Dendritic cell treated with granulocyte-macrophage colony-stimulating factor and Interleukin-4, amounts not matched to agents 40 ng/mL and 50 ng/mL, for 4 days (primary cell): ENCODE measurements at regions of chr3 and their contacts with region 1.

Region 1: GRCh38 chr3:43326891-43327581 is 40.7 kb downstream of the SNRK start:
- H3K4me3 Mint-ChIP-seq: peak overlapping the region; percentile 52
- H3K27ac Mint-ChIP-seq: peak overlapping the region; percentile 85
- H3K4me1 Mint-ChIP-seq: peaks cover 55% of the 10 kb centered on the region
- H3K27me3 Mint-ChIP-seq: no peaks in the 10 kb centered on the region

Region 2: GRCh38 chr3:43194490-43195114 is 132.4 kb before region 1 on chr3:
- intact Hi-C with region 1: no loop called
- H3K4me3 Mint-ChIP-seq: no peak overlapping the region
- H3K27ac Mint-ChIP-seq: no peak overlapping the region
- H3K4me1 Mint-ChIP-seq: peaks cover 6% of the 10 kb centered on the region
- H3K27me3 Mint-ChIP-seq: peaks cover 2% of the 10 kb centered on the region

Region 3: DNA sequence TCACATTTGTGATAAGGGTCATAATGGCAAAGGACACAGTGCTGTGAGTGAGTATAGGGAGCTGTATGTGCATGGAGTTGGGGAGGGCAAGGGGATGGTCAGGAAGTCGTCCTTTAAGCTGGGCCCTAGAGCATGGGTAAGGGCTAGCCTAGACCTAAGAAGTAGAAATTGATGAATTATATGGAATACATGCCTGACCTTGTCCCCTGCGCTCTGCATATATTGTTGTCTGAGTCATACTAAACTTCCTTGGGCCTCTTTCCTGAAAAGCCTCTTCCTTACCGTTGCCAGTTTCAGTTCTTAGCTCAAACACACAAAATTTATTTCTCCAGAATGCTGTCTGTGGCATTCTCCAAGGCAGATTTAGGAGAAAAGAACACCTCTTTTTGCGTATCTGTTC is 36.1 kb before region 1 on chr3:
- intact Hi-C with region 1: loop called (anchors 5 kb)
- H3K4me3 Mint-ChIP-seq: peak overlapping the region; percentile 50
- H3K27ac Mint-ChIP-seq: peak overlapping the region; percentile 73
- H3K4me1 Mint-ChIP-seq: peaks cover 60% of the 10 kb centered on the region
- H3K27me3 Mint-ChIP-seq: no peaks in the 10 kb centered on the region